ENCODE measurements at regions of chr3 and their contacts with region 1.

Region 1: DNA sequence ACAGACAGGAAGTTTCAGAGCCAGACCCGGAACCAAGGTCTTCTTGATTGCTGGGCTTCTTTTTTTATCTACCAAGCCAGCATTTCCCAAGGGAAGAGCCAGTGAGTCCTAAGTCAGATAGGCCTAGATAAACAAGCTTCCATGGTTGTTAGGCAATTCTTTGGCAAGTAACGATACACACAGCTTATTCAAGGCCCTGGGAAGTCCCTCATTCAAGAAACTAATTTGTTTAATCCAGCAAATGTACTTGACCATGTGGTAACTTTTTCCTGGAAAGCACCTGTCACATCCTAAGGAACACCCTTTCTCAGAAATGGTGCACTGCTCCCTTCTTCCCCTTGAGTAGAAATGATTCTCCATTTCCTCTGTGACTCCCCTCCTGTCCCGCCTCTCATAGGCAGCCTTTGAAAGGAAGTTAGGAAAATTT is 209.9 kb downstream of the ITPR1 start:
- DNase-seq: no peak
- ATAC-seq: peak; percentile 63 to 95 (median 88)
- H3K4me3 ChIP-seq: no peak overlapping the region
- H3K27ac ChIP-seq: peak overlapping the region in 2 of 4 donors; percentile 55
- H3K4me1 ChIP-seq: peaks cover 0 to 16% (median 0%) of the 10 kb centered on the region in 3 donors
- H3K27me3 ChIP-seq: no peaks in the 10 kb centered on the region
- CTCF ChIP-seq: no peak

Region 2: DNA sequence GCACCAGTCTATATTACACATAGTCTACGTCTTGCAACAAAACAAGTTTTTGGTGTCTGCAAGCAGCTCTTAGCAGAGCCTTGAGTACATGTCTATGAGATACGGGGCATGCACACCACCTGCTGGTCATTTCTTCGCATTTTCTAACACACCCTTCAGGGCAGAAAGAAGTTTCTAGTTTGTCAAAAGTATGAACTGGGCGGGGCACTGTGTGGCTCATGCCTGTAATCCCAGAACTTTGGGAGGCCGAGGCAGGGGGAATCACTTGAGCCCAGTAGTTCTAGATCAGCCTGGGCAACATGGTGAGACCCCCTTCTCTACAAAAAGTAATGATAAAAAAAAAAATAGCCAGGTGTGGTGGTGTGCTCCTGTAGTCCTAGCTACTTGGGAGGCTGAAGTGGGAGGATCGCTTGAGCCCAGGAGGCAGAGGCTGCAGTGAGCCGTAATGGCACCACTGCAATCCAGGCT is 354.8 kb after region 1 on chr3:
- intact Hi-C with region 1: loop called in 1 of 3 experiments (anchors 10 kb)
- DNase-seq: peak in 5 of 6 donors; percentile 56 to 83 (median 68)
- ATAC-seq: peak; percentile 91 to 97 (median 92)
- H3K4me3 ChIP-seq: no peak overlapping the region
- H3K27ac ChIP-seq: no peak overlapping the region
- H3K4me1 ChIP-seq: no peaks in the 10 kb centered on the region
- H3K27me3 ChIP-seq: no peaks in the 10 kb centered on the region
- CTCF ChIP-seq: peak; percentile 56 to 63 (median 61)

Measured in pancreas (tissue), 10 donors.